Endothelial cell of umbilical vein (primary cell): ENCODE measurements at regions of chr2 and their contacts with region 1.

Region 1: GRCh38 chr2:24164125-24164973 is 10.5 kb upstream of the FAM228A start:
- DNase-seq: no peak
- H3K4me3 ChIP-seq: no peak overlapping the region
- H3K27ac ChIP-seq: no peak overlapping the region
- H3K4me1 ChIP-seq: no peaks in the 10 kb centered on the region
- H3K27me3 ChIP-seq: no peaks in the 10 kb centered on the region
- CTCF ChIP-seq: peak; percentile 64 to 76
- POLR2A ChIP-seq: no peak

Region 2: GRCh38 chr2:23988371-23988770 is 176.0 kb before region 1 on chr2:
- CTCF ChIA-PET with region 1: no interaction called
- POLR2A ChIA-PET with region 1: no interaction called
- dilution Hi-C with region 1: no loop called
- intact Hi-C with region 1: loop called (anchors 1 kb)
- DNase-seq: peak; percentile 35
- H3K4me3 ChIP-seq: no peak overlapping the region
- H3K27ac ChIP-seq: no peak overlapping the region
- H3K4me1 ChIP-seq: no peaks in the 10 kb centered on the region
- H3K27me3 ChIP-seq: no peaks in the 10 kb centered on the region
- CTCF ChIP-seq: peak; percentile 10 to 13
- POLR2A ChIP-seq: no peak

Region 3: DNA sequence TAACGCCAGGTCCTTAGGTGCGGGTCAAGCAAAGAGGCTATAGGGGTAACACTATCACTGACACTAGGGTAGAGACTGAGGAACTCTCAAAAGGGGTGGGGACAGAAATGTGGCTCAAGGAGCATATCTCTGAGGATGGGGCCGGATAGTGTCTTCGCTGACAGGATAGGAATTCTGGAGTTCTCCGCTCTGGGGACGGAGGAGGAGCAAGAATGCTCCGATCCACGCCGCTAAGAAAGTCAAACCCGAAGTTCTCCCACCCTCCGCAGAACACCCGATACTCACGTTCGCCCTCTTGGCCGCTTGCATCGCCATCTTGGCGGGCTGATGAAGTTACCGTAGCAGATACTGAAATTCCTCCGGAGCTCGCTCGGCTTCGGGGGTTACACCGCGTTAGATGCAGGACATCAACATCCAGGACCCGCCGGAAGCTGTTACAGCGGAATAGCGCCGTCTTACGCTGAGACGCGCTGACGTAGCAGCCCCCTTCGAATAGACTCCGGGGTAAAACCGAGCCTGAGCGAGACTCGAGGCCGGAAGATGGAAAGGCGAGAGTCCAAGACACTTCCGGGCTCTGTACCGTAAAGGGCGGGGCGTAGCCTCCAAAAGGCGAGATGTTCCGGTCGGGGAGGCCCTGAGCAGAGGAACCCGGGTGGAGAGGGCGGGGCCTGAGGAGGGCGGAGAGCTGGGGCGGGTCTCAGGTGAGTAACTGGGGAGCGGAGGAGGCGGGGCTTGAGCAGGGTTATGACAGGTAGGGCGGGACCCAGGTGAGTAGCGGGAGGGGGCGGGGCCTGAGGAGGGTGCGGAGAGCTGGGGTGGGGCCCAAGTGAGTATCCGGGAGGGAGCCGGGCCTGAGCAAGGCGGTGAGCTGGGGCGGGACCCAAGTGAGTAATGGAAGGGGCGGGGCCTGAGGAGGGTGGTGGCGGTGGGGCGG is 88.2 kb before region 1 on chr2 and contains the start of gene SF3B6:
- CTCF ChIA-PET with region 1: no interaction called
- POLR2A ChIA-PET with region 1: no interaction called
- dilution Hi-C with region 1: no loop called
- intact Hi-C with region 1: loop called (anchors 2 kb)
- DNase-seq: peak; percentile 98
- H3K4me3 ChIP-seq: peak within 1 kb of the TSS; percentile 79 to 92 (median 87)
- H3K27ac ChIP-seq: peak within 1 kb of the TSS; percentile 18
- H3K4me1 ChIP-seq: peaks cover 12% of the 10 kb centered on the region
- H3K27me3 ChIP-seq: no peaks in the 10 kb centered on the region
- CTCF ChIP-seq: no peak
- POLR2A ChIP-seq: peak; percentile 79
- total RNA-seq, gene SF3B6: 105 and 108 TPM in 2 replicates

Region 4: GRCh38 chr2:24153478-24153877 is 10.9 kb before region 1 on chr2:
- CTCF ChIA-PET with region 1: interaction called, 6 read pairs
- POLR2A ChIA-PET with region 1: no interaction called
- dilution Hi-C with region 1: no loop called
- intact Hi-C with region 1: loop called (anchors 1 kb)
- DNase-seq: no peak
- H3K4me3 ChIP-seq: no peak overlapping the region
- H3K27ac ChIP-seq: no peak overlapping the region
- H3K4me1 ChIP-seq: no peaks in the 10 kb centered on the region
- H3K27me3 ChIP-seq: no peaks in the 10 kb centered on the region
- CTCF ChIP-seq: no peak
- POLR2A ChIP-seq: no peak

Region 5: DNA sequence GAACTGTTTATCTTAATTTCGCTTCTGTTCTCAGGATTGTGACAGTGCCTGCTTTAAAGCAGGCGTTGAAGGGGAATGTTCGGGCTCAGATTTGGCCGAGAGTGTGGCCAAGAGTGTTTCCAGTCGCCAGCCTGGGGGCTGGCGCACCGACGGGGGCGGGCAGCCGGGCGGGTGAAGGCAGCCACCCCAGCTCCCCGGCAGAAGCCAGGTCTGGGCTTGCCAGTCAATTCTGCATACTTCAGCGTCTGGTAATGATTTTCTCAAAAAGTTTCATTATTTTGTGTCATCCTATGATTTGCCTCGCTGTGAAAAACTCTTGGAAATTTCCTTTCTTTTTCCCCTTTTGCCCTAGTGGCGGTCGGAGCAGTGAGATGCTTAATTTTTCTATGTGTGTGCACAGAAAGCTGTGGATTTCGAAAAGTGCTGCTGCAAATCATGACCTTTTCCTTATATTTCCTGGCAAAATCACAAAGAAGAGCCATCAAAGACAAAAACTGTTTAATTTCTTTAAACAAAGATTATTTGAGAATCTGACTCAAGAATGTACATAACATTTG is 11.4 kb after region 1 on chr2:
- CTCF ChIA-PET with region 1: interaction called, 11 read pairs
- POLR2A ChIA-PET with region 1: no interaction called
- dilution Hi-C with region 1: no loop called
- intact Hi-C with region 1: no loop called
- DNase-seq: no peak
- H3K4me3 ChIP-seq: no peak overlapping the region
- H3K27ac ChIP-seq: no peak overlapping the region
- H3K4me1 ChIP-seq: no peaks in the 10 kb centered on the region
- H3K27me3 ChIP-seq: peaks cover 0 to 1% of the 10 kb centered on the region in 2 experiments
- CTCF ChIP-seq: no peak
- POLR2A ChIP-seq: no peak

Region 6: DNA sequence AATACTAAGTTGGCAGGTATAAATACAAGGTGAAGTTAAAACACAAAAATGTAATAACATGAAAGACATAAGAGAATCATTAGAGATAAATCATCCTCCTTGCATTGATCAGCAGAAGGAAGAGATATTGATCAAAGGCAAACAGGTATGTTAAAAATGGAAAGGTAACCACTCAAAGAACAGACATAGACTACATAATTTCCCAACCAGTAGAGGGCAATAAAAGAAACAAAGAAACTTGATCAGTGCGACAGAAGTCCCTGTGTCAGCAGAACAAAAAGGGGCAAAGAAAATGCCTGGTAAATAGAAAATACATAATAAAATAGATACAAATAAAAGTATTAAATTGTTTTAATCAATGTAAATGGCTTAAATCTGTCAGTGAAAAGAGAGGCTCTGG is 64.1 kb after region 1 on chr2:
- CTCF ChIA-PET with region 1: no interaction called
- POLR2A ChIA-PET with region 1: no interaction called
- dilution Hi-C with region 1: no loop called
- intact Hi-C with region 1: no loop called
- DNase-seq: peak; percentile 39
- H3K4me3 ChIP-seq: no peak overlapping the region
- H3K27ac ChIP-seq: no peak overlapping the region
- H3K4me1 ChIP-seq: no peaks in the 10 kb centered on the region
- H3K27me3 ChIP-seq: no peaks in the 10 kb centered on the region
- CTCF ChIP-seq: peak; percentile 12 to 19
- POLR2A ChIP-seq: no peak